Motor neuron (in vitro differentiated cells): ENCODE measurements at regions of chr4 and their contacts with region 1.

Region 1: DNA sequence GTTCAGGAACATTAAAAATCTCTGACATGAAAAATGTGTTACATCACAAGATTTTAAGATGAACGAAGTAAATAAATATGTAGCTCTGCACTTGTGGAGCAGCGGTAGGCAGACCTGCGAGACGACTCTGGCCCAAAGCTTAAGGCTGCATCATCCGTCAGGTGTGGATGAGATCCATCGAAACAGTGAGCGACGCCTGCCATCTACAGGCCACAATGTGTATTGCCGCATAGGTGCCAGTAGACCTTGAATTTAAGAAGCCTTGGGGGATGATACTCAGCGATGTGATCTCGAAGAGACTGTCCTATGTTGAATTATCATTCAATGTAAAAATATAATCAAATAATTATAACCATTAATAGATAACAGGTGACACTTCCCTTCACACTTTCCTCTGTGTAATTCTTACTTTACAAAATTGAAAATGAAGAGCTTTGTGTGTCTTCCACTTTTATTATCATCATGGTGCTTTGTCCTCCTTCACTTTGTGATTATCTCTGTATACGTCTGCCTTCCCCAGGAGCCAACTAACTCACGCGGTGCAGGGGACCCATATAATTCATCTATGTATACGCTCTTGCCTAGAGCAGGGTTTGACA is 851.0 kb downstream of the RAB28 start:
- ATAC-seq: peak; percentile 78 to 95 (median 85)
- H3K4me3 ChIP-seq: no peak overlapping the region
- H3K27ac ChIP-seq: no peak overlapping the region
- H3K4me1 ChIP-seq: no peaks in the 10 kb centered on the region

Region 2: DNA sequence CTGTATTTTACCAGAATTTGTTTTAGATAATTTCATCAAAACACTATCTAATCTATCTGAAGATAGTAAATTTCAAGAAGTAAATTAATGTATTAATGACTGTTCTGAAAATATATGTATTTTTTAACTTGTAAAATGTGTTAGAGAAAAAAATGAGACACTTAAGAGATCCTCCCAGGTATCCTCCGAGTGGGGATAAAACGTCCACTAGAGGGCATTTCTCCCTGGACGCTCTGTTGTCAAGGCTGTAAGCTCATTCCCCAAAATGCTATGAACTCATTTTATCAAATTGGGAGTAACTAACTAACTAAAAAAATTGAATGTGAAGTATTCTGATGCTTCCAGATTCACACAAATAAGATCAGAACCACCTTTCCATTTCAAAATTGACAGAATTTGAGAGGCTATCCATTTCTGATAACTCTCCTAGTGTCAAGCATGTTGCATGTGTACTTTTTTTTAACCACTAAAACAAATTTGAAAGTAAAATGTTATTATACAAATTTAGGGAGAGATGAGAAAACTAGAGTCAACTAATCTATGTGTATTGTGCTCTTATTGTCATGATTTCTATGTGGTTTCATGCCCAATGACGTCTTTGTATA is 867.2 kb before region 1 on chr4:
- in situ Hi-C with region 1: loop called in 2 of 9 experiments (anchors 25 kb)
- ATAC-seq: peak in 4 of 8 experiments; percentile 48 to 82 (median 78)
- H3K4me3 ChIP-seq: no peak overlapping the region
- H3K27ac ChIP-seq: no peak overlapping the region
- H3K4me1 ChIP-seq: no peaks in the 10 kb centered on the region

Region 3: GRCh38 chr4:12242354-12242753 is 390.8 kb before region 1 on chr4:
- in situ Hi-C with region 1: no loop called
- ATAC-seq: no peak
- H3K4me3 ChIP-seq: no peak overlapping the region
- H3K27ac ChIP-seq: no peak overlapping the region
- H3K4me1 ChIP-seq: no peaks in the 10 kb centered on the region

Region 4: GRCh38 chr4:12852338-12853307 is 219.5 kb after region 1 on chr4:
- in situ Hi-C with region 1: no loop called
- ATAC-seq: peak; percentile 80 to 92 (median 91)
- H3K4me3 ChIP-seq: no peak overlapping the region
- H3K27ac ChIP-seq: no peak overlapping the region
- H3K4me1 ChIP-seq: peaks cover 3 to 7% of the 10 kb centered on the region in 2 donors